AG04449 (cell line): ENCODE measurements at regions of chr11 and their contacts with region 1.

Region 1: DNA sequence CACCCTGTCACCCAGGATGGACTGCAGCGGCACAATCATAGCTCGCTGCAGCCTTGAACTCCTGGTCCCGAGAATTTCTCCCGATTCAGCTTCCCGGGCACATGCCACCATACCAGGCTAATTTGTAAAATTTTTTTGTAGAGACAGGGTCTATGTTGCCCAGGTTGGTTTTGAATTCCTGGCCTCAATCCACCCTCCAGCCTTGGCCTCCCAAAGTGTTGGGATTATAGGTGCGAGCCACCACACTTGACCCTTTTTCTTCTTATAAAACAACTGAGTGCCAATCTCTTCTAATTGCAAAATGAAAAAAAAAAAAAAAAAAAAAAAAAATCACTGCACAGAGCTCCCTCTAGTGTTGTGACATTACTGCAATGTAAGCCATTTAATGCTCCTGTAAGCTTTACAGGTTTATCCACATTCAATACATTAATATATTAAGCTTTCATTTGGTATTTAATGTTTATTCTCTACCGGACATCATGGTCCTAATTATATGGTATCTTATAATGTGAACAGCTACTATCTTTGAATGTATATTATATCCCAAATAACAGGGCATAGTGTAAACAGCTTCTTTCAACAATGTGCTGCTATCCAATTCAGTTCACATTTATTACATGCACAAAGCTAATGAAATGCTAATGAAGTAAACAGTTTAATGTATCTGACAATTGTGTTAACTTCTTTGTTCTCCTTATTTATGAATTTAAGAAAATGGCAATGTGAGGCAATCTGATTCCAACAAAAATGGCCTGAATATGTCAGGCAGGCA is 44.6 kb downstream of the COPB1 start:
- DNase-seq: no peak
- H3K4me3 ChIP-seq: no peak overlapping the region
- CTCF ChIP-seq: peak; percentile 35

Region 2: GRCh38 chr11:14202251-14203196 is 252.5 kb before region 1 on chr11:
- CTCF ChIA-PET with region 1: no interaction called
- POLR2A ChIA-PET with region 1: no interaction called
- DNase-seq: no peak
- H3K4me3 ChIP-seq: no peak overlapping the region
- CTCF ChIP-seq: no peak

Region 3: GRCh38 chr11:14275076-14275475 is 180.0 kb before region 1 on chr11:
- CTCF ChIA-PET with region 1: interaction called, 11 read pairs
- POLR2A ChIA-PET with region 1: no interaction called
- DNase-seq: peak; percentile 23
- H3K4me3 ChIP-seq: no peak overlapping the region
- CTCF ChIP-seq: no peak

Region 4: DNA sequence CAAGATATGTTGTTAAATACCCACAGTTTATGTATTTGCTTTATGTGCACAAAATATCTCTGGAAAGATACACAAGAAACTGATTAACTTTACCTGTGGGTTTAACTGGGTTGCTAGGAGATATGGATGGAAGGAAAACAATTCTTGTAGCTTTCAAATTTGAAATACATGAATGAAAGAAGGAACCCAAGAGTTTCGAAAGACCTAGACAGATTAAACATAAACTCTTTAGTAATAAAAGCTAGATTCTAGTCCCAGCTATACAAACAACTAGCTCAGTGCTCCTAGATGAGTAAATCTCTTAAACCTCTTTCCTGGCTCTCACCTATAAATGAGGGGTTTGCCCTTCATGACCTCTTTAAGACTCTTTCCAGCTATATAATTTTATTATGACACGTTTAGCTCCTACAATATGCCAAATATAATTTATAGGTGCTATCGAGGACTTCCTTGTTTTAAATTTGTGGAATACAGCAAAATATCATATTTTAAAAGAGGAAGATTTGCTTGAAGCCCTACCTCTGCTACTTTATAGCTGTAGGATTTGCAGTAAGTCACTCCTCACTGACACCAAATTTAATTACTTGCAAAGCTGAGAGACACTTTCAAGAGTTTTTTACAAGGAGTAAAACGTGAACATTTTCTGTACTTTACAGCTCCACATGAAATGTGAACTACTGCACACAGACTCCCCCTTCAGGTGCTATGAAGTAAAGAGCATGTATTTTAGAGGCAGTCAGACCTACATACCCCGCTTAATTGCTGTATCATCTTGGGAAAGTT is 146.7 kb before region 1 on chr11:
- CTCF ChIA-PET with region 1: interaction called, 469 read pairs
- POLR2A ChIA-PET with region 1: no interaction called
- DNase-seq: no peak
- H3K4me3 ChIP-seq: no peak overlapping the region
- CTCF ChIP-seq: peak; percentile 63

Region 5: GRCh38 chr11:14358729-14359439 is 96.2 kb before region 1 on chr11 and contains the start of gene RRAS2:
- CTCF ChIA-PET with region 1: interaction called, 11 read pairs
- POLR2A ChIA-PET with region 1: interaction called, 10 read pairs
- DNase-seq: no peak
- H3K4me3 ChIP-seq: peak within 1 kb of the TSS; percentile 76
- CTCF ChIP-seq: no peak

Region 6: GRCh38 chr11:14435717-14436512 is 19.1 kb before region 1 on chr11:
- CTCF ChIA-PET with region 1: interaction called, 14 read pairs
- POLR2A ChIA-PET with region 1: no interaction called
- DNase-seq: no peak
- H3K4me3 ChIP-seq: no peak overlapping the region
- CTCF ChIP-seq: no peak

Region 7: DNA sequence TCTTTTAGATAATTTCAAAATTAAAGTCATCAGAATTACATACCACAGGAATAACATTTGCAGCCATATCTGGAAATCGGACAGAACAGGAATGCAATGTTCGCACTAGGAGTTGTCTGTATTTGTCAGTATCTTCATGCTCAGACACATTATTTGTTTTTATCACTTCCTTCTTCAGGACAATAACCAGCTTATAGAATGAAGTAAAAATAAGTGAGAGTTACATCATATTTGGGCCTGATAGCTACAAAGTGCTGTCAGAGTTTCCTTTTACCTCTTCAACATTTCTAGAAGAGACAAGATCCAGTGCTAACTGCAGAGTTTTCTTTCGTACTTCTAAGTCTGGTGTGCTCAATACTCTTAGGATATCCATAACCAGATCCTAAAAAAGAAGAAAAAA is 25.7 kb after region 1 on chr11:
- CTCF ChIA-PET with region 1: interaction called, 22 read pairs
- POLR2A ChIA-PET with region 1: no interaction called
- DNase-seq: no peak
- H3K4me3 ChIP-seq: no peak overlapping the region
- CTCF ChIP-seq: no peak